ENCODE measurements at regions of chr15 and their contacts with region 1.

Region 1: DNA sequence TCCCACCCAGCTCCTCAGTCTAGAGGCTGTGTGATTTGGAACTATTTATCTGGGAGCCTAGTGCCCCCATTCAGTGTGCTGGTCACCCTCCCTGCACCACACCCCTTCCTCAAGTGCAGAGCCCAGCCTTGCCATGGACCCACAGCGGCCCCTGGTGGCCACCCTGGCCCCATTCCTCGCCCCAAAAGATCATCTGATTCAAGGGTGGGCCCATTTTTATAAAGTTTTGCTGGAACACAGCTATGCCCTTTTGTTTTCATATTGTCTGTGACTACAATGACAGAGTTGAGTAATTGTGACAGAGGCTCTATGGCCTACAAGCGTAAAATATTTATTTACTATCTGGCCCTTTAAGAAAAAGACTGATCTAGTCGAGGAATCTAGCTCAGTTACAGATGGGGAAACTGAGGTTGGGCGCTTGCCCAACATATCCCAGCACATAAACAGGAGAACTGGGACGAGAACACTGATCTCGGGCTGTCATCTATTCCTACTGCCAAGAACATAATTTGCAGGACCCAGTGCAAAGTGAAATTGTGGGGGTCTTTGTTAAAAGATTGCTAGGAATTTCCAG is 1.8 kb downstream of the FES start:
- DNase-seq: peak in 1 of 2 experiments; percentile 61
- ATAC-seq: peak; percentile 57 to 82; a peak in 5 of 6 replicates
- H3K4me3 ChIP-seq: no peak overlapping the region
- H3K27ac ChIP-seq: peak overlapping the region in 1 of 2 experiments; percentile 19; a peak in 1 of 6 replicates
- H3K4me1 ChIP-seq: no peaks in the 10 kb centered on the region
- CTCF ChIP-seq: peak; percentile 99
- EP300 ChIP-seq: no peak
- POLR2A ChIP-seq: no peak
- RAD21 ChIP-seq: peak; percentile 100

Region 2: GRCh38 chr15:90291679-90292356 is 594.3 kb before region 1 on chr15:
- CTCF ChIA-PET with region 1: interaction called, 12 read pairs
- POLR2A ChIA-PET with region 1: no interaction called
- DNase-seq: peak; percentile 62 to 71
- ATAC-seq: peak; percentile 32 to 66; a peak in 3 of 6 replicates
- H3K4me3 ChIP-seq: no peak overlapping the region
- H3K27ac ChIP-seq: no peak overlapping the region
- H3K4me1 ChIP-seq: no peaks in the 10 kb centered on the region
- CTCF ChIP-seq: no peak
- EP300 ChIP-seq: no peak; a peak in 1 of 5 replicates
- POLR2A ChIP-seq: no peak
- RAD21 ChIP-seq: no peak

Region 3: DNA sequence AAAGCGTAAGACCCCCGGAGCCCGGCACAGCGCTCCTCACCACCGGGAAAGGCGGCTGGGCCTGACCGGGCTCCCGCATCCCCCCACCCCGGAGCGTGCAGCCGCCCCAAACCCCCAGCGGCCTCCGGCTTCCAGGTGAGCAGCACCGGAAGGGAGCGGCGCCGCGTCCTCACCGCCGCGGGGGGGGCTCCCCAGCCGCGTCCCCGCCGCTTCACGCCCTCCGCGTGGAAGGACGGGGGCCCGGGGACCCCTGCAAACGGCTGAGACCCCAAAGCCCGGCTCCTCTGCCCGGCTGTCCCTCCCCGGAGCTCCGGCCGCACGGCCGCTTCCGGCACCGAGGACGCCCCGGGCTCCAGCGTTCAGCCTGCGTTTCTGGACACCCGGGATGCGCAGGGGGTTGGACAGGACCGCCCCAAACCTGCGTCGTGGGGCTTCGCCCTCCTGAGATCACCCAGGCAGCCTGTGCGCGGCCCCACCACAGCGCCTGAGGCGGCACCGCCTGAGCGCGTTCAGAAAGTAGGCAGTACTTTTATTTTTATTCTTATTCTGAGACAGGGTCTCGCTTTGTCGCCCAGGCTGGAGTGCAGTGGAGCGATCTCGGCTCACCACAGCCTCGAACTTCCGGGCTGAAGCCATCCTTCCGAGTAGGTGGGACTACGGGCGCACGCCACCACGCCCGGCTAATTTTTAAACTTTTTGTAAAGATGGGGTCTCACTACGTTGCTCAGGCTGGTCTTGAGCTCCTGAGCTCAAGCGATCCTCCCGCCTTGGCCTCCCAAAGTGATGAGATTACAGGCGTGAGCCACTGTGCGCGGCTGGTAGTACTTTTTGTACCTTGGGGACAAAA is 220.6 kb before region 1 on chr15:
- CTCF ChIA-PET with region 1: interaction called, 265 read pairs
- POLR2A ChIA-PET with region 1: no interaction called
- DNase-seq: peak; percentile 78 to 95
- ATAC-seq: peak; percentile 94 to 97
- H3K4me3 ChIP-seq: peak overlapping the region; percentile 73
- H3K27ac ChIP-seq: peak overlapping the region; percentile 90 to 95
- H3K4me1 ChIP-seq: peaks cover 14% of the 10 kb centered on the region
- CTCF ChIP-seq: no peak
- EP300 ChIP-seq: no peak
- POLR2A ChIP-seq: peak; percentile 78; the same call in 1 of the 2 replicates
- RAD21 ChIP-seq: no peak

Region 4: DNA sequence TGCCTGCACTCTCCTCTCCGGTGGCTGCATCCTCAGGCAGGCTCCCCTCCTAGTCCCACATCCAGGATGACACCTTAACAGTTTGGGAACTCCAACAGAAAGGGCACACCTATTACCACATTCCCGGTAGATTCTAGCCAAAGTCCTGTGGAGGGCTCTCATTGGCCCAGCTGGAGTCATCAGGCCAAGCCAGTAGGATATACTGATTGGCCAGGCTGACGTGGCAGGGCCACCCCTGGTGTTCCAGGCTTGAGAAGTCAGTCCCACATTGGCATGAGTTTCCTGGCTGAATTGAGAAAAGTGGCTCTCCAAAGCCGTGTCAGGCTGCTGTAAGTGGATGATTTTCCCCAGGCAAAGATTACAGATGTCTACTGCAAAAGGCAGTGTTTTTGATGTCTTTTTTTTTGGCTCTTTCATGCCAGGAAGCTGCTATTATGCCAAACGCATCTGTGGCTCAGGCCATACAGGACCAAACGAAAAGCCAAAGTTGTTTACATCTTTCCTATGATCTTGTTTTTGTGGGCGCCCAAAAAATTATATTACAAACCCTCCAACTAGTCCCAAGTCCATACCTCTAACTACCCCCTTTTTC is 175.6 kb before region 1 on chr15:
- CTCF ChIA-PET with region 1: interaction called, 13 read pairs
- POLR2A ChIA-PET with region 1: no interaction called
- DNase-seq: peak in 1 of 2 experiments; percentile 14
- ATAC-seq: peak; percentile 43 to 81; a peak in 4 of 6 replicates
- H3K4me3 ChIP-seq: no peak overlapping the region
- H3K27ac ChIP-seq: no peak overlapping the region
- H3K4me1 ChIP-seq: no peaks in the 10 kb centered on the region
- CTCF ChIP-seq: no peak
- EP300 ChIP-seq: no peak
- POLR2A ChIP-seq: no peak
- RAD21 ChIP-seq: no peak

Region 5: DNA sequence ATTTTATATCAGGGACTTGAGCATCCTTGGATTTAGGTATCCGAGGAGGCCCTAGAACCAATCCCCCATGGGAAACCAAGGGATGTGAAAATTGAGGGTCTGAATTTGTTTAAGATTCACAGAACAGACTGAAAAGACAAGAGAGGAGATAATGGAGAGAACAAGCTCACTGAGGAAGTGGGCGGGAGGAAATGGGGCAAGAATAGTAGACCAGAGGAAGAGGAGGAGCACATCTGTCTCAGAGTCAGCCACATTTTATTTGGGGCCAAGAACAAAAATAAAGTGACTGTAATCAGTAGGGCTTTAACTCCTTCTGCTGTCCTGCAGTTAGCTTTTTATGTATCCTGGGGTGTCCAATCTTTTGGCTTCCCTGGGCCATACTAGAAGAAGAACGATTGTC is 105.2 kb before region 1 on chr15:
- CTCF ChIA-PET with region 1: interaction called, 10 read pairs
- POLR2A ChIA-PET with region 1: no interaction called
- DNase-seq: no peak
- ATAC-seq: no peak
- H3K4me3 ChIP-seq: no peak overlapping the region
- H3K27ac ChIP-seq: no peak overlapping the region
- H3K4me1 ChIP-seq: no peaks in the 10 kb centered on the region
- CTCF ChIP-seq: no peak
- EP300 ChIP-seq: no peak
- POLR2A ChIP-seq: no peak
- RAD21 ChIP-seq: no peak

Region 6: DNA sequence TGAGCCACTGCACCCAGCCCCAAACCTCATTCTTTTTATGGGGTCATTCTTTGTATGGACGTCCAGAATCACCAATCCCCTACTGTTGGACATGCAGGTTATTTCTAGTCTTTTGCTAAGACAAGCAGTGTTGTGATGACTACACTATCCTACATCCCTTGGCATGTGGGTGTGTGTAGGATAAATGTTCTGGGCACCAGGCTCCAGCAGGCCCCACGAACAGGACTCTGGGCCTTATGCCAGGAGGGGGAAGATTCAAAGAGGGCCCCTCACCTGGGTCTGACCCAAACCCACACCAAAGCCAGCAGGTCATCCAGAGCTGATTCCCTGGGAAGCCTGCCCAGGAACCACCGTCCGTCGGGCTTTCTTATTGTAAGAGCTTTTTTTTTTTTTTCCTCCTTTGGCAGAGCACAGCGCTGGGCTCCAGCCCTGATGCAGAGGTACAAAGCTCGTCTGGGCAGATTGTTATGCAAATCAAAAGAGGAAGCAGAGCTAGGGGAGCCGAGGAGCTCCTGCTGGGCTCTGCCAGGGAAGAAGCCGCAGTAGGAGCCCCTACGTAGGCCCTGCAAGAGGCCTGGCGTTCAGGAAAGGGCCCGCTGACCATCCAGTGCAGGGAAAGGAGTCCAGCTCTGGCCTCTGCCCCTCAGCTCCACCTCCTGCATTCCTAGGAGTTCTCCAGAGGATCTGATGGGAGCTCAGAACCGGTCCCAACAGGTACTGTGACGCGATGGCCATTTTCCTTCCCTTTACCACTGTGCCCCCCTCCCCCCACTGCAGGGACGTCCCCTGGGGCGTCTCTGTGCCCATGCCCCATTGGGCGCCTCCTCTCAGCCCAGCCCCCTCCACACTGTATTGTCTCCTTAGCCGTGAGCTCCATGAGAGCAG is 46.7 kb before region 1 on chr15:
- CTCF ChIA-PET with region 1: interaction called, 29 read pairs
- POLR2A ChIA-PET with region 1: no interaction called
- DNase-seq: no peak
- ATAC-seq: peak; percentile 21 to 39; a peak in 3 of 6 replicates
- H3K4me3 ChIP-seq: no peak overlapping the region
- H3K27ac ChIP-seq: no peak overlapping the region
- H3K4me1 ChIP-seq: peaks cover 10% of the 10 kb centered on the region
- CTCF ChIP-seq: no peak
- EP300 ChIP-seq: no peak
- POLR2A ChIP-seq: no peak
- RAD21 ChIP-seq: no peak

Region 7: DNA sequence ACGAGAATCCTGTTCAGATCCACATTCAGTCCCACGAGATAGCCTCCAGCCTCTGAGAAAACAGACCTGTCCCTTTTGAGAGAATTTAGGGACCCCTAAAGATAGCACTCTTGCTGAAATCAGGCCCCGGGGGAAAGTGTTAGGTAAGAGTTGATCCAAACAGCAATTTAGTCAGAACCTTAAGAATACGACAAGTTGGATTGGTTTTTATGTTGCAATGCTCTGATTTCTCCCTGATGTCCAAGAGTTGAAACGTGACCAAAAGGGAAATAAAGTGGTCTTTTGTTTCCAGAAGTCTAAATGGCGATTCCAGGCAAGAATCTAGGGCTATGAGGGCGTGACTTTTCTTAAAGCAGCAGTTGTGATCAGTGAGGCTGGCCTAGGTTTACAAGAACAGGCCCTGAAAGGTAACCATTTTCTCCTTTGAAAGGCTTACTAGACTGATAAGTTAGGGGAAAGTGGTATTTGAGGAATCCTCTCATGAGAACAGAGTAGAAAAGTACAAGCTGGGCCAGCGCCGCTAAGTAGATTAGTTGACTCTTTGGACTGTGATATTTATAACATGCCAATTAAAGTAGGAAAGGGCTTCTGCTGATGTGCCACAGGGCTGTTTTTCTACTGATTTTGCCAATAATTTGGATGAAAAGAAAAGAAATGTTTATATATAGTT is 21.8 kb after region 1 on chr15:
- CTCF ChIA-PET with region 1: interaction called, 79 read pairs
- POLR2A ChIA-PET with region 1: no interaction called
- DNase-seq: no peak
- ATAC-seq: no peak
- H3K4me3 ChIP-seq: no peak overlapping the region
- H3K27ac ChIP-seq: no peak overlapping the region
- H3K4me1 ChIP-seq: peaks cover 6% of the 10 kb centered on the region; the same call in 2 of the 3 replicates
- CTCF ChIP-seq: no peak
- EP300 ChIP-seq: no peak
- POLR2A ChIP-seq: no peak
- RAD21 ChIP-seq: no peak

Measured in A549 (cell line).